ENCODE measurements at regions of chr22 and their contacts with region 1.

Region 1: DNA sequence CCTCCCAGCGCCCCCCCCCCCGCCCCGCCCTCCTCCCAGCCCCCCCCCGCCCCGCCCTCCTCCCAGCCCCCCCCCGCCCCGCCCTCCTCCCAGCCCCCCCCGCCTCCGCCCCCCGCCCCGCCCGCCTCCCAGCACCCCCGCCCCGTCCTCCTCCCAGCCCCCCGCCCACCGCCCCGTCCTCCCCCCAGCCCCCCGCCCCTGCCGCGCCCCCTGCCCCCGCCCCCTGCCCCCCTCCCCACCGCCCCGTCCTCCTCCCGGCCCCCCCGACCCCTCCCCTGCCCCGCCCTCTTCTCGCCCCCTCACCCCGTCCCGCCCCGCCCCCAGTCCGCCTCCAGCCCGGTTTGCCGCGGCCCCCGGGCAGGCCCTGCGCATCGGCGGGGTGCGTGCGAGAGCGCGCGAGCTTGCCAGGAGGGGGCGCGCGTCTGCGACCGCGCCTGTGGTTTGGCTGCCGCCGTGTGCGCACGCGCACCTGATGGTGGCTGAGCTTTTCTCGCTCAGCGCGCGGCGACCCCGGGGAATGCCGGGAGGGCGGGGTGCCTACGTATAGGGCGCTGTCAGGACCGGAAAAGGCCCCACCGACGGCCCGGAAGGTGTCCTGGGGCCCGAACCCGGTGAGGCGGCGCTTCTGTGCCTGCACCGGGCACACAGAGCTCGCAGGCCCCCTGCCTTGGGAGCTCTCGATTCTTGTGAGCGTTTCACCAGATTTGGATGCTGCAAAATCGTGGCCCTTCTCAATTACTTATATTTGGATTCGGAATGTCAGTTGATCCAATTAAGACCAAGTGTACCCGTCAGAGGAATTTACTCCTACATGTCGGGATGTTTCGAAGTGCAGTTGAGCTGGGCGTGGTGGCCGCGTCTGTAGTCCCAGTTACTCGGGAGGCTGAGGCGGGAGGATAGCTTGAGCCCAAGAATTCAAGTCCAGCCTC is 501 bp upstream of the TTLL12 start:
- DNase-seq: peak; percentile 92 to 99 (median 97)
- ATAC-seq: peak; percentile 86
- H3K4me3 ChIP-seq: peak overlapping the region; percentile 60
- H3K4me3 Mint-ChIP-seq: peak overlapping the region; percentile 86
- H3K27ac ChIP-seq: peak overlapping the region; percentile 95 to 97
- H3K27ac Mint-ChIP-seq: peak overlapping the region; percentile 99
- H3K4me1 ChIP-seq: peaks cover 23% of the 10 kb centered on the region
- H3K4me1 Mint-ChIP-seq: peaks cover 25% of the 10 kb centered on the region
- H3K27me3 ChIP-seq: no peaks in the 10 kb centered on the region
- H3K27me3 Mint-ChIP-seq: no peaks in the 10 kb centered on the region
- CTCF ChIP-seq: peak; percentile 52

Region 2: GRCh38 chr22:42635531-42635930 is 551.9 kb before region 1 on chr22:
- CTCF ChIA-PET with region 1: no interaction called
- POLR2A ChIA-PET with region 1: no interaction called
- intact Hi-C with region 1: no loop called
- DNase-seq: no peak
- ATAC-seq: no peak
- H3K4me3 ChIP-seq: no peak overlapping the region
- H3K4me3 Mint-ChIP-seq: no peak overlapping the region
- H3K27ac ChIP-seq: no peak overlapping the region
- H3K27ac Mint-ChIP-seq: no peak overlapping the region
- H3K4me1 ChIP-seq: no peaks in the 10 kb centered on the region
- H3K4me1 Mint-ChIP-seq: no peaks in the 10 kb centered on the region
- H3K27me3 ChIP-seq: no peaks in the 10 kb centered on the region
- H3K27me3 Mint-ChIP-seq: no peaks in the 10 kb centered on the region
- CTCF ChIP-seq: no peak

Region 3: GRCh38 chr22:42856865-42857704 is 330.4 kb before region 1 on chr22 and contains the start of gene ARFGAP3:
- CTCF ChIA-PET with region 1: no interaction called
- POLR2A ChIA-PET with region 1: interaction called, 6 read pairs
- intact Hi-C with region 1: loop called in 1 of 2 experiments (anchors 2 kb)
- DNase-seq: peak; percentile 85 to 98 (median 94)
- ATAC-seq: peak; percentile 93
- H3K4me3 ChIP-seq: peak within 1 kb of the TSS; percentile 74
- H3K4me3 Mint-ChIP-seq: peak within 1 kb of the TSS; percentile 92
- H3K27ac ChIP-seq: peak within 1 kb of the TSS; percentile 86 to 87
- H3K27ac Mint-ChIP-seq: peak within 1 kb of the TSS; percentile 91
- H3K4me1 ChIP-seq: peaks cover 32% of the 10 kb centered on the region
- H3K4me1 Mint-ChIP-seq: peaks cover 12% of the 10 kb centered on the region
- H3K27me3 ChIP-seq: no peaks in the 10 kb centered on the region
- H3K27me3 Mint-ChIP-seq: no peaks in the 10 kb centered on the region
- CTCF ChIP-seq: no peak
- total RNA-seq, gene ARFGAP3: 19.5 to 21.4 TPM

Region 4: DNA sequence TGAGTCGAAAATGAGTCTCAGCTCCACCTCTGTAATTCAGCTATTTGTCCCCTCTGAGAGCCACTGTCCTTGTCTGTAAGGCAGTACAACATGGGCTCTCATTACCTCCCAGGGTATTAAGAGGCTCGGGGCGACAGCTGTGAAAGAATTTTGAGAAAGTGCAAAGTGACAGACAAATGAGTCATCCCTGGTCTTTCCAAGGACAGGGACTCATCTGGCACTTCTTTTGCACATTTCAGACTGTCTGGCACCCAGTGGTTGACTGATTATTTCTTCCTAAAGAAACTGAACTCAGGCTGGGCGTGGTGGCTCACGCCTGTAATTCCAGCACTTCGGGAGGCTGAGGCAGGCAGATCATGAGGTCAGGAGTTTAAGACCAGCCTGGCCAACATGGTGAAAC is 268.2 kb before region 1 on chr22:
- CTCF ChIA-PET with region 1: no interaction called
- POLR2A ChIA-PET with region 1: no interaction called
- intact Hi-C with region 1: no loop called
- DNase-seq: peak in 1 of 14 experiments; percentile 47
- ATAC-seq: no peak
- H3K4me3 ChIP-seq: no peak overlapping the region
- H3K4me3 Mint-ChIP-seq: no peak overlapping the region
- H3K27ac ChIP-seq: no peak overlapping the region
- H3K27ac Mint-ChIP-seq: no peak overlapping the region
- H3K4me1 ChIP-seq: peaks cover 5% of the 10 kb centered on the region
- H3K4me1 Mint-ChIP-seq: peaks cover 30% of the 10 kb centered on the region
- H3K27me3 ChIP-seq: no peaks in the 10 kb centered on the region
- H3K27me3 Mint-ChIP-seq: no peaks in the 10 kb centered on the region
- CTCF ChIP-seq: no peak

Region 5: GRCh38 chr22:43088979-43089717 is 98.3 kb before region 1 on chr22 and contains the start of gene TTLL1:
- CTCF ChIA-PET with region 1: no interaction called
- POLR2A ChIA-PET with region 1: interaction called, 3 read pairs
- intact Hi-C with region 1: loop called in 1 of 2 experiments (anchors 2 kb)
- DNase-seq: peak; percentile 73 to 93 (median 86)
- ATAC-seq: peak; percentile 95
- H3K4me3 ChIP-seq: peak within 1 kb of the TSS; percentile 63
- H3K4me3 Mint-ChIP-seq: peak within 1 kb of the TSS; percentile 92
- H3K27ac ChIP-seq: peak within 1 kb of the TSS; percentile 42 to 58
- H3K27ac Mint-ChIP-seq: peak within 1 kb of the TSS; percentile 70
- H3K4me1 ChIP-seq: peaks cover 31% of the 10 kb centered on the region
- H3K4me1 Mint-ChIP-seq: peaks cover 16% of the 10 kb centered on the region
- H3K27me3 ChIP-seq: no peaks in the 10 kb centered on the region
- H3K27me3 Mint-ChIP-seq: no peaks in the 10 kb centered on the region
- CTCF ChIP-seq: no peak
- total RNA-seq, gene TTLL1: 2.6 to 2.8 TPM

Region 6: DNA sequence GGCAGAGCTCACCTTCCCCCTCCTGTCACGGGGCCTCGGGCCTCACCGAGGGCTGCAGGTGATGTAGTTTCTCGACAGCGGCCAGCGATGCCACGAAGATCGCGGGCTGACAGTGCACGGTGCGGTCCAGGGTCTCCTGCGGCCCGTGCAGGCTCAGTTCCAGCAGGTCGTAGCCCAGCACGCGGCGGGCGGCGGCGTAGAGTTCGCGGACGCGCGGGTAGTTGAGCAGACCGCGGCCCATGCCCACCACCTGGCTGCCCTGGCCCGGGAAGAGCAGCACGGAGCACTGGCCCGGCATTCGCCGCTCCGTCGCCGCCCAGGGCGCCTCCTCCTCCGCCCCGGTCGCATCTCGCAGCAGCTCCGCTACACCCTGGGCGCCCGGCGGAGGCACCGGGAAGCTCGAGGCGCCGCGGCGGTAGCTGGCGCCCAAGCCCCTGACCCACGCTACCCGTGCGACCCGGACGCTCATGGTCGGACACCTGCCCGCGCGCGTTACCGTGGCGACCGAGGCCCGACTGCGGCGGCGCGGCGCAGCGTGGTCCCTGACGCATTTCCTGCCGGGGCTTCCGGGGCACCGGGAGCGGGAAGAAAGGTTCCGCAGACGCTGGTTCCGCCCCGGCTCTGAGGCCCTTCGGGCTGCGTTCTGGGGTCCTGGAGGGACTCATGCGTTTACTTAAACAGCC is 44.4 kb before region 1 on chr22 and contains the start of gene MCAT:
- CTCF ChIA-PET with region 1: interaction called, 6 read pairs
- POLR2A ChIA-PET with region 1: interaction called, 28 read pairs
- intact Hi-C with region 1: loop called in 1 of 2 experiments (anchors 2 kb)
- DNase-seq: peak; percentile 64 to 88 (median 73)
- ATAC-seq: peak; percentile 86
- H3K4me3 ChIP-seq: peak within 1 kb of the TSS; percentile 75
- H3K4me3 Mint-ChIP-seq: peak within 1 kb of the TSS; percentile 91
- H3K27ac ChIP-seq: peak within 1 kb of the TSS; percentile 65 to 67
- H3K27ac Mint-ChIP-seq: peak within 1 kb of the TSS; percentile 95
- H3K4me1 ChIP-seq: peaks cover 24% of the 10 kb centered on the region
- H3K4me1 Mint-ChIP-seq: peaks cover 28% of the 10 kb centered on the region
- H3K27me3 ChIP-seq: no peaks in the 10 kb centered on the region
- H3K27me3 Mint-ChIP-seq: no peaks in the 10 kb centered on the region
- CTCF ChIP-seq: no peak
- total RNA-seq, gene MCAT: 16.1 to 18.0 TPM

Region 7: GRCh38 chr22:43257549-43257948 is 70.1 kb after region 1 on chr22:
- CTCF ChIA-PET with region 1: no interaction called
- POLR2A ChIA-PET with region 1: no interaction called
- intact Hi-C with region 1: no loop called
- DNase-seq: no peak
- ATAC-seq: no peak
- H3K4me3 ChIP-seq: no peak overlapping the region
- H3K4me3 Mint-ChIP-seq: no peak overlapping the region
- H3K27ac ChIP-seq: no peak overlapping the region
- H3K27ac Mint-ChIP-seq: no peak overlapping the region
- H3K4me1 ChIP-seq: peaks cover 5% of the 10 kb centered on the region
- H3K4me1 Mint-ChIP-seq: peaks cover 19% of the 10 kb centered on the region
- H3K27me3 ChIP-seq: no peaks in the 10 kb centered on the region
- H3K27me3 Mint-ChIP-seq: peaks cover 8% of the 10 kb centered on the region
- CTCF ChIP-seq: no peak

Region 8: GRCh38 chr22:43828998-43829782 is 641.8 kb after region 1 on chr22:
- CTCF ChIA-PET with region 1: no interaction called
- POLR2A ChIA-PET with region 1: no interaction called
- intact Hi-C with region 1: no loop called
- DNase-seq: no peak
- ATAC-seq: no peak
- H3K4me3 ChIP-seq: no peak overlapping the region
- H3K4me3 Mint-ChIP-seq: no peak overlapping the region
- H3K27ac ChIP-seq: no peak overlapping the region
- H3K27ac Mint-ChIP-seq: no peak overlapping the region
- H3K4me1 ChIP-seq: no peaks in the 10 kb centered on the region
- H3K4me1 Mint-ChIP-seq: no peaks in the 10 kb centered on the region
- H3K27me3 ChIP-seq: peaks cover 3 to 4% of the 10 kb centered on the region in 2 experiments
- H3K27me3 Mint-ChIP-seq: peaks cover 19% of the 10 kb centered on the region
- CTCF ChIP-seq: no peak

Measured in CD4-positive, alpha-beta T cell (primary cell).